ENCODE measurements at regions of chr1 and their contacts with region 1.

Region 1: GRCh38 chr1:88920845-88921244 is 29.5 kb upstream of the GTF2B start:
- DNase-seq: no peak
- H3K4me3 Mint-ChIP-seq: no peak overlapping the region
- H3K27ac Mint-ChIP-seq: no peak overlapping the region
- H3K4me1 Mint-ChIP-seq: peaks cover 7% of the 10 kb centered on the region
- H3K27me3 Mint-ChIP-seq: no peaks in the 10 kb centered on the region

Region 2: GRCh38 chr1:88910401-88910800 is 10.4 kb before region 1 on chr1:
- CTCF ChIA-PET with region 1: no interaction called
- POLR2A ChIA-PET with region 1: no interaction called
- intact Hi-C with region 1: loop called (anchors 1 kb)
- DNase-seq: no peak
- H3K4me3 Mint-ChIP-seq: no peak overlapping the region
- H3K27ac Mint-ChIP-seq: no peak overlapping the region
- H3K4me1 Mint-ChIP-seq: no peaks in the 10 kb centered on the region
- H3K27me3 Mint-ChIP-seq: no peaks in the 10 kb centered on the region

Region 3: DNA sequence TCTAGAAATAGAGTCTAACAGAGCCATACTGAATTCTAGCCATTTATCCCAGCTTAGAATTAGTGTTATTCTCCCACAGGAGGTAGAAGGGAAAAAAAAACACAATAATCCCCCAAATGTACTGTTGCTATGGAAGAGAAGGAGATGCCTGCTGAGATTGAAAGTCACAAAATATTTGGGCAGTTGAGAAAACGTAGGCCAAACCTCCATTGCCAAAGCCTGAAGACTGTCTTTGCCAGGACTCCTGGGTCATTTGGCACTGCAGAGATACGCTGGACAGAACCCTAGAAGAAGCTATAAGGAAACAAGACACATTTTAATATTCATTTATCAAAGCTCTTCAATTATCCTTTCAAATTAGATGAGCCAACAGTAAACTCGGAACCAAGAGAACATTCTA is 1774.0 kb after region 1 on chr1:
- CTCF ChIA-PET with region 1: no interaction called
- POLR2A ChIA-PET with region 1: no interaction called
- intact Hi-C with region 1: no loop called
- DNase-seq: no peak
- H3K4me3 Mint-ChIP-seq: no peak overlapping the region
- H3K27ac Mint-ChIP-seq: no peak overlapping the region
- H3K4me1 Mint-ChIP-seq: no peaks in the 10 kb centered on the region
- H3K27me3 Mint-ChIP-seq: peaks cover 20% of the 10 kb centered on the region

Measured in activated CD4-positive, alpha-beta memory T cell treated with anti-CD3 and anti-CD28 coated beads for 36 hours (primary cell).